Activated T-helper 2 cell treated with anti-CD3 and anti-CD28 coated beads, Interferon-gamma antibody, Interleukin-2, Interleukin-4, amounts not matched to agents 10 μg/mL and 5 μg/mL and 100 μg/mL, durations not matched to agents 14 hours and 24 hours and 36 hours (primary cell): ENCODE measurements at regions of chr2 and their contacts with region 1.

Region 1: GRCh38 chr2:168773719-168774521 is 28.5 kb upstream of the NOSTRIN start:
- DNase-seq: peak; percentile 30
- H3K4me3 Mint-ChIP-seq: no peak overlapping the region
- H3K27ac Mint-ChIP-seq: no peak overlapping the region
- H3K4me1 Mint-ChIP-seq: no peaks in the 10 kb centered on the region
- H3K27me3 Mint-ChIP-seq: no peaks in the 10 kb centered on the region

Region 2: GRCh38 chr2:168920504-168921157 is 146.7 kb after region 1 on chr2:
- intact Hi-C with region 1: loop called (anchors 2 kb)
- DNase-seq: no peak
- H3K4me3 Mint-ChIP-seq: no peak overlapping the region
- H3K27ac Mint-ChIP-seq: no peak overlapping the region
- H3K4me1 Mint-ChIP-seq: peaks cover 10% of the 10 kb centered on the region
- H3K27me3 Mint-ChIP-seq: peaks cover 58% of the 10 kb centered on the region